ENCODE measurements at regions of chr7 and their contacts with region 1.

Region 1: DNA sequence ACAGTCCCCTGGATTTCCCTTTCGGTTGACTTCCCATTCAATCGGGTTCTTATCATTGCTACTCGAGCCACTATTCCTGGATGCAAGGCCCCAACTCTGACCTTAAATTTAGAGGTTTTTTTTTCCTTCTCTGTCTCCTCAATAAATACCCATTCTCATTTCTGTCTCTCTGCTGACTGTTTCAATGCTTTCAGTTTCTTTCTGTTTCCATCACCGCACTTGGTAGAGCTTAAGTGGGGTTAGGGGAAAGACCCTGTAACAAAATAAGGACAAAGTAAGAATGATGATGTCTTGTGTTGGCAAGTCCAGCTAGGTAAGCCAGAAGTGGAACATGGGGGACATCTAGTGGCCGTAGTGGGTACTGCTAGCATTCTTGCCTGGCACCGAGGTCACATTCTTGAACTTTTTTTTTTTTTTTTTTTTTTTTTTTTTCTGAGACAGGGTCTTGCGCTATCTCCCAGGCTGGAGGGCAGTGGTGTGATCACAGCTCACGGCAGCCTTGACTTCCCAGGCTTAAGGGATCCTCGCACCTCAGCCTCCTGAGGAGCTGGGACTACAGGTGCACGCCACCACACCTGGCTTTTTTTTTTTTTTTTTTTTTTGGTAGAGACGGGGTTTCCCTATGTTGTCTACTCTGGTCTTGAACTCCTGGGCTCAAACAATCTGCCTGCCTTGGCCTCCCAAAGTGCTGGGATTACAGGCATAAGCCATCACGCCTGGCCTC is 40.3 kb downstream of the ZC3HC1 start:
- DNase-seq: peak in 4 of 5 donors; percentile 94 to 96 (median 94)
- H3K4me3 ChIP-seq: no peak overlapping the region
- H3K27ac ChIP-seq: peak overlapping the region in 1 of 2 donors; percentile 28
- H3K4me1 ChIP-seq: peaks cover 0 to 11% (median 0%) of the 10 kb centered on the region in 3 donors
- H3K27me3 ChIP-seq: no peaks in the 10 kb centered on the region
- CTCF ChIP-seq: peak; percentile 98

Region 2: GRCh38 chr7:129664029-129665012 is 346.5 kb before region 1 on chr7:
- intact Hi-C with region 1: loop called (anchors 10 kb)
- DNase-seq: peak in 2 of 5 donors; percentile 62 to 75
- H3K4me3 ChIP-seq: no peak overlapping the region
- H3K27ac ChIP-seq: no peak overlapping the region
- H3K4me1 ChIP-seq: no peaks in the 10 kb centered on the region
- H3K27me3 ChIP-seq: no peaks in the 10 kb centered on the region
- CTCF ChIP-seq: peak; percentile 49

Region 3: GRCh38 chr7:129825496-129826267 is 185.2 kb before region 1 on chr7:
- intact Hi-C with region 1: loop called (anchors 10 kb)
- DNase-seq: peak; percentile 91 to 96 (median 92)
- H3K4me3 ChIP-seq: peak overlapping the region; percentile 51 to 79 (median 77)
- H3K27ac ChIP-seq: peak overlapping the region in 1 of 2 donors; percentile 34
- H3K4me1 ChIP-seq: peaks cover 0 to 8% (median 0%) of the 10 kb centered on the region in 3 donors
- H3K27me3 ChIP-seq: no peaks in the 10 kb centered on the region
- CTCF ChIP-seq: peak; percentile 65

Measured in kidney (tissue), 22 donors.